B cell (primary cell): ENCODE measurements at regions of chr20 and their contacts with region 1.

Region 1: DNA sequence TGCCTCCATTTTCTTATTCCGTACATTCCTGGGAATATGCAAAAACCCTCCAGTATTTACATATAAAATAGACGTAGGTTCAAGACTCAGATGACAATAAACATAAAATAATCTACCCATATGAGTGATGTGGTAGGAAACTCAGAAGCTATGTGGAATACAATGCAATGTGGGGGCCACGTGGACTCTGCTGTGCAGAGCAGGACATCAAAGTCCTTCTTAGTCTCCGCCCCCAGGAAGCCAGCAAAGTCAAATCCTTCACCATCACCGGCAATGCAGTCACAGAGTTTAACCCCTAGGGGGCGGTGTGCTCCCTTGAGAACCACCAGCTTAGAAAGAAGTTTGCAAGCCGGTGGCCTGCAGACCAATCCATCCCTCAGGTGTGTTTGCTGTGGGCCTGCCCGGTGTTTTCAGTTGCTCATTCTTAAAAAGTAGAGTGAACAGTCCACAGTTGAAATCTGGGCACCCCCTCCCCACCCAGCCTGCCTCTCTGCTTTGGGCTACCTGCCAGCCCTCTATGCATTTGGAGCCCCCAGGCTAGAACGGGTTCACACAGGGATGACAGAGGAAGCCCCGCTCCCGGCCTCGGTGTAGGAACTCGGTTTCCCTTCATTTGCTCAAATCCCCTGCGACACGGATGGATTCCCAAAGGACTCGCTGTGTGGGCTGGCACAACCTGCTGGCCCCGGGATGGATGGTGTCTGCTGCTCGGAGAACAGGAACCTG is 59.9 kb downstream of the SULF2 start:
- DNase-seq: peak; percentile 89
- ATAC-seq: peak; percentile 13
- H3K4me3 ChIP-seq: no peak overlapping the region
- H3K4me3 Mint-ChIP-seq: no peak overlapping the region
- H3K27ac ChIP-seq: no peak overlapping the region
- H3K27ac Mint-ChIP-seq: peak overlapping the region; percentile 55
- H3K4me1 ChIP-seq: peaks cover 37 to 49% of the 10 kb centered on the region in 2 donors
- H3K4me1 Mint-ChIP-seq: peaks cover 50% of the 10 kb centered on the region
- H3K27me3 ChIP-seq: no peaks in the 10 kb centered on the region
- H3K27me3 Mint-ChIP-seq: no peaks in the 10 kb centered on the region
- CTCF ChIP-seq: peak; percentile 92

Region 2: DNA sequence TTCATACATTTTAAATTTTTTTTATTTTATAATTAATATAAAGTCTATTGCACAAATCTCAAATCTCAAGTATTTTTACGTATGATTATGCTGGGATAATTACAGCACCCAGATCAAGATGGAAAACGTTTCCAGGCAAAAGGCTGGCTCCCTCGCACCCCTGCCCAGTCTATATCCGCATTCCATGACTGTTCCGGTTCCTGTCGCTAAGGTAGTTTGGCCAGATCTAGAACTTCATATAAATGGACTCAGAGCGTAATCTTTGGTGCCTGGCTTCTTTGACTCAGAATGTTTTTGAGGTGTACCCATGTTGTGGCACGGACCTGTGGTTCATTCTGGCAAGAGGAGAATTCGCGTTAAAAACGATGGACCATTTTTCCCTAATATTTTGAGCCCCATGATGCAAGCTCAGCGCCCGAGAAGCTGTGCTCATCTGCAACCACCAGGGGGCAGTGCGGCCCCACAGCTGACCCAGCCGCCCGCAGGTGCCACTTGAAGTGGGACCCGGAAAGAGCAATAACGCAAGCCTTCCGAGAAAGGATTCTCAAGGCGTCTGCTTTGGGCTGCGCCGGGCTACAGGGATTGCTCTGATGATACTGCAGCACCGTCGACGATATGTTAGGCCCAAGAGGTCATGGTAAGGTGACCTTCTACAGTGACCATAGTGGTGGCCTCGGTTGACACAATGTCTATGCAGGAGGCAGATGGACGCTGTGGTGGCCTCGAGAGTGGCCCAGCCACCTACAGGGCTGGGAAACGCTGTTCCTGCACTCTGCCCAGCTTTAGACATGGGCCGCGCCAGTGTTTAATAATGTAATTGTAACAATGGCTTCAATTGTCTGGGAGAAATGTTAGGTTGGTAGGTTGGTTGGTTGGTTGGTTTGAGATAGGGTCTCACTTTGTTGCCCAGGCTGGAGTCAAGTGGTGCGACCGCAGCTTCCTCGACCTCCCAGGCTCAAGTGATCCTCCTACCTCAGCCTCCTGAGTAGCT is 529.0 kb before region 1 on chr20:
- CTCF ChIA-PET with region 1: no interaction called
- POLR2A ChIA-PET with region 1: no interaction called
- intact Hi-C with region 1: loop called (anchors 1 kb)
- DNase-seq: peak; percentile 81
- ATAC-seq: peak; percentile 82
- H3K4me3 ChIP-seq: peak overlapping the region in 2 of 5 experiments; percentile 12 to 33
- H3K4me3 Mint-ChIP-seq: peak overlapping the region; percentile 16
- H3K27ac ChIP-seq: no peak overlapping the region
- H3K27ac Mint-ChIP-seq: no peak overlapping the region
- H3K4me1 ChIP-seq: peaks cover 3 to 7% of the 10 kb centered on the region in 2 donors
- H3K4me1 Mint-ChIP-seq: peaks cover 5% of the 10 kb centered on the region
- H3K27me3 ChIP-seq: no peaks in the 10 kb centered on the region
- H3K27me3 Mint-ChIP-seq: no peaks in the 10 kb centered on the region
- CTCF ChIP-seq: peak; percentile 100

Region 3: GRCh38 chr20:47677635-47678453 is 47.6 kb before region 1 on chr20:
- CTCF ChIA-PET with region 1: interaction called, 33 read pairs
- POLR2A ChIA-PET with region 1: no interaction called
- intact Hi-C with region 1: loop called (anchors 5 kb)
- DNase-seq: peak; percentile 79
- ATAC-seq: peak; percentile 72
- H3K4me3 ChIP-seq: no peak overlapping the region
- H3K4me3 Mint-ChIP-seq: no peak overlapping the region
- H3K27ac ChIP-seq: no peak overlapping the region
- H3K27ac Mint-ChIP-seq: no peak overlapping the region
- H3K4me1 ChIP-seq: no peaks in the 10 kb centered on the region
- H3K4me1 Mint-ChIP-seq: peaks cover 1% of the 10 kb centered on the region
- H3K27me3 ChIP-seq: peaks cover 0 to 2% (median 0%) of the 10 kb centered on the region in 4 experiments
- H3K27me3 Mint-ChIP-seq: peaks cover 5% of the 10 kb centered on the region
- CTCF ChIP-seq: peak; percentile 88

Region 4: GRCh38 chr20:47785854-47786764 is 60.7 kb after region 1 on chr20:
- CTCF ChIA-PET with region 1: interaction called, 24 read pairs
- POLR2A ChIA-PET with region 1: no interaction called
- intact Hi-C with region 1: loop called (anchors 1 kb)
- DNase-seq: peak; percentile 71
- ATAC-seq: peak; percentile 67
- H3K4me3 ChIP-seq: peak overlapping the region; percentile 24 to 79 (median 54)
- H3K4me3 Mint-ChIP-seq: peak overlapping the region; percentile 89
- H3K27ac ChIP-seq: no peak overlapping the region
- H3K27ac Mint-ChIP-seq: no peak overlapping the region
- H3K4me1 ChIP-seq: peaks cover 19 to 25% of the 10 kb centered on the region in 2 donors
- H3K4me1 Mint-ChIP-seq: peaks cover 23% of the 10 kb centered on the region
- H3K27me3 ChIP-seq: peaks cover 0 to 46% (median 25%) of the 10 kb centered on the region in 4 experiments
- H3K27me3 Mint-ChIP-seq: peaks cover 58% of the 10 kb centered on the region
- CTCF ChIP-seq: peak; percentile 64

Region 5: DNA sequence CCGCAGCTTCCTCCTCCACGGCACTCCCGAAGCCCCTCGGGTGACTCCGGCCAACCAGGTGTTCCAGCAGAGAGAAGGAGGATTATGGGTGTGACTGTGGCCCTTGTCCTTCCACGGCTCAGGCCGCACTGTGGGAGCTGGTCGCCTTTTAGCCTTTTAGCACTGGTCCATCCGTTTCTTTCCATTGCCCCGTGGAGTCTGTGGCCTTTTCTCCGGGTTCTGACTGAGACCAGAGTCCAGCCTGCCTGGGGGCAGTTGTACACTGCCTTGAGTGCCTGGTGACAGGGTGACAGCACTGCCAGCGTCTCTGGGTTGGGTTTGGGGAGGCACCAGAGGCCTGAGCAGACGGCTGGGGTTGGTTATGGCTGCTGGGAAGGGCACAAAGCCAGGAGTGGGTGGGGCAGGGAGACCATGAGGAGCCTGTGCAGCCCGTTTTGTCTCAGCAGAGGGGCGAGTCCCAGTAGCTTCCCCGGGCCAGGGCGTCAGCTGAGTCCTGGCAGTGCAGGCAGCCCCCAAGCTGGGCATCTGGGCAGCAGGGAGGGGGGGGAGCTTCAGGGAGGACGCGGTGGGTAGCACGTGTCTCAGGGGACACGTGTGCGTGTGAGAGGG is 75.1 kb after region 1 on chr20:
- CTCF ChIA-PET with region 1: no interaction called
- POLR2A ChIA-PET with region 1: no interaction called
- intact Hi-C with region 1: no loop called
- DNase-seq: no peak
- ATAC-seq: no peak
- H3K4me3 ChIP-seq: no peak overlapping the region
- H3K4me3 Mint-ChIP-seq: no peak overlapping the region
- H3K27ac ChIP-seq: no peak overlapping the region
- H3K27ac Mint-ChIP-seq: no peak overlapping the region
- H3K4me1 ChIP-seq: no peaks in the 10 kb centered on the region
- H3K4me1 Mint-ChIP-seq: no peaks in the 10 kb centered on the region
- H3K27me3 ChIP-seq: no peaks in the 10 kb centered on the region
- H3K27me3 Mint-ChIP-seq: peaks cover 18% of the 10 kb centered on the region
- CTCF ChIP-seq: no peak

Region 6: GRCh38 chr20:48002227-48002970 is 277.0 kb after region 1 on chr20:
- CTCF ChIA-PET with region 1: no interaction called
- POLR2A ChIA-PET with region 1: no interaction called
- intact Hi-C with region 1: loop called (anchors 5 kb)
- DNase-seq: peak; percentile 76
- ATAC-seq: peak; percentile 76
- H3K4me3 ChIP-seq: peak overlapping the region in 1 of 5 experiments; percentile 5
- H3K4me3 Mint-ChIP-seq: peak overlapping the region; percentile 21
- H3K27ac ChIP-seq: peak overlapping the region; percentile 59 to 68
- H3K27ac Mint-ChIP-seq: peak overlapping the region; percentile 4
- H3K4me1 ChIP-seq: peaks cover 57 to 59% of the 10 kb centered on the region in 2 donors
- H3K4me1 Mint-ChIP-seq: peaks cover 71% of the 10 kb centered on the region
- H3K27me3 ChIP-seq: no peaks in the 10 kb centered on the region
- H3K27me3 Mint-ChIP-seq: no peaks in the 10 kb centered on the region
- CTCF ChIP-seq: no peak

Region 7: DNA sequence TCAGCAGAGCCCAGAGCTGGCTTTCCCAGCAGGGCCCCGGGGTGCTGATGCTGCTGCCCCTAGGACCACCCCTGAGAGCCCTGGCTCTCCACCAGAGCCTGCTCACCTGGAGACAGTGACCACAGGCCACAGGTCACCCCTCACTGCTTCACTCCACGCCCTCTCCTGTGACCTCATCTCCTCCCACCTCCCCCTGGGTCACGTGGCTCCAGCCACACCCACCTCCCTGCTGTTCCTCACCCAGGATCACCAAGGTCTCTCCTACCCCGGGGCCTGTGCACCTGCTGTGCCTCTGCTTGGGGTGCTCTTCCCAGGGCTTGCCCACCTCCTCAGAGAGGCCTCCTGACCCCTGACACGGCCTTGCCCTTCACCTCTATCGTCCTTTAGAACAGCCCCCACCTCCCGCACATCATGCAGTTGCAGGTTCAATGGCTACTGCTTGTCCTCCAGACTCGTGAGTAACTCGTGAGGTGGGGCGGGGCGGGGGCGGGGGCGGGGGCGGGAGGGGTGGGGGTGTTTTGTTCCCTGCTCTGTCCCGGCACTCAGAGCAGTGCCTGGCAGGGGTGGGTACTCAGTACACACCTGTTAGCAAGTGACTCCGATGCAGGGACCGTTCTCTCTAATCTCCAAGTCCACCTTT is 634.4 kb after region 1 on chr20:
- CTCF ChIA-PET with region 1: interaction called, 3 read pairs
- POLR2A ChIA-PET with region 1: interaction called, 3 read pairs
- intact Hi-C with region 1: loop called (anchors 1 kb)
- DNase-seq: peak; percentile 93
- ATAC-seq: peak; percentile 85
- H3K4me3 ChIP-seq: peak overlapping the region in 4 of 5 experiments; percentile 44 to 62 (median 53)
- H3K4me3 Mint-ChIP-seq: peak overlapping the region; percentile 91
- H3K27ac ChIP-seq: peak overlapping the region; percentile 94 to 96
- H3K27ac Mint-ChIP-seq: peak overlapping the region; percentile 96
- H3K4me1 ChIP-seq: peaks cover 34 to 57% of the 10 kb centered on the region in 2 donors
- H3K4me1 Mint-ChIP-seq: peaks cover 52% of the 10 kb centered on the region
- H3K27me3 ChIP-seq: no peaks in the 10 kb centered on the region
- H3K27me3 Mint-ChIP-seq: no peaks in the 10 kb centered on the region
- CTCF ChIP-seq: no peak

Region 8: GRCh38 chr20:48921151-48921898 is 1195.9 kb after region 1 on chr20 and contains the start of gene ARFGEF2:
- CTCF ChIA-PET with region 1: no interaction called
- POLR2A ChIA-PET with region 1: no interaction called
- intact Hi-C with region 1: loop called (anchors 5 kb)
- DNase-seq: peak; percentile 96
- ATAC-seq: peak; percentile 92
- H3K4me3 ChIP-seq: peak within 1 kb of the TSS; percentile 59 to 91 (median 86)
- H3K4me3 Mint-ChIP-seq: peak within 1 kb of the TSS; percentile 96
- H3K27ac ChIP-seq: peak within 1 kb of the TSS; percentile 88 to 91
- H3K27ac Mint-ChIP-seq: peak within 1 kb of the TSS; percentile 95
- H3K4me1 ChIP-seq: peaks cover 47 to 55% of the 10 kb centered on the region in 2 donors
- H3K4me1 Mint-ChIP-seq: peaks cover 49% of the 10 kb centered on the region
- H3K27me3 ChIP-seq: no peaks in the 10 kb centered on the region
- H3K27me3 Mint-ChIP-seq: no peaks in the 10 kb centered on the region
- CTCF ChIP-seq: no peak
- total RNA-seq, gene ARFGEF2: 34.3 and 41.3 TPM in 2 replicates